Heart right ventricle (tissue), 16 donors: ENCODE measurements at regions of chr2 and their contacts with region 1.

Region 1: GRCh38 chr2:159797543-159798375 is at the start of gene CD302:
- DNase-seq: peak; percentile 80 to 86
- ATAC-seq: peak; percentile 81 to 93 (median 88)
- H3K4me3 ChIP-seq: peak within 1 kb of the TSS; percentile 56 to 97 (median 81)
- H3K27ac ChIP-seq: peak within 1 kb of the TSS; percentile 5 to 90 (median 82)
- H3K4me1 ChIP-seq: peaks cover 0 to 50% (median 16%) of the 10 kb centered on the region in 9 donors
- H3K27me3 ChIP-seq: no peaks in the 10 kb centered on the region
- CTCF ChIP-seq: no peak
- total RNA-seq, gene CD302: 8.2 to 25.2 (median 12.9) TPM

Region 2: DNA sequence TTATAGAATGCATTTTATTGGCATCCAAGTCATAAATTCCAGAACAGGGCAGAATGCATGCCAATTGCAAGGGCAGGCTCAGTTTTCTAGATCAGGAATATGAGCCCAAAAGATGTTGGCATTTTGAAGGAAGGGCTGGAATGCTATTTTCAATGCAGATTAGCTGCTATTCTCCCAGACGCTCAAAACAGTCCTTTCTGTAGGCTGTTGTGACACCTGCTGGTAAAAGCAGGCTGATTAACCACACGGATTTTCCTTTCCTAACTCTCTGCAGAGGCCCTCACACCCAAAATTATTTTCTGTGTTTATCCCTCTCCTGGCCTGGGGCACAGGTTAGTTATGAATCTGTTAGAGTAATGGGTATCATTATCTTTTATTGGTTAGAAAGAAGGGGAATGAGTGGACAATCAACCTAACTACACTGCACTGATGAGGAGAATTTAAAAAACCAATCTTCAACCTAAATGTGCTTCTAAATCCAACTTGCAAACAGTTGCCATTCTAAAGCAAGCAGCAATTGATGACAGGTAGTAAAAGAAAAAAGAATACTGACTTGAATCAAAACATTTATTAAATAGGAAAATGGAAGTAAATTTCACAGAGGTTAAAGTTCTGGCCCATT is 170.6 kb after region 1 on chr2:
- intact Hi-C with region 1: loop called in 3 of 10 experiments (anchors 10 kb)
- DNase-seq: peak in 1 of 2 donors; percentile 32
- ATAC-seq: peak in 6 of 8 donors; percentile 55 to 79 (median 72)
- H3K4me3 ChIP-seq: no peak overlapping the region
- H3K27ac ChIP-seq: no peak overlapping the region
- H3K4me1 ChIP-seq: peaks cover 0 to 4% (median 0%) of the 10 kb centered on the region in 9 donors
- H3K27me3 ChIP-seq: no peaks in the 10 kb centered on the region
- CTCF ChIP-seq: peak; percentile 40 to 75 (median 63)

Region 3: DNA sequence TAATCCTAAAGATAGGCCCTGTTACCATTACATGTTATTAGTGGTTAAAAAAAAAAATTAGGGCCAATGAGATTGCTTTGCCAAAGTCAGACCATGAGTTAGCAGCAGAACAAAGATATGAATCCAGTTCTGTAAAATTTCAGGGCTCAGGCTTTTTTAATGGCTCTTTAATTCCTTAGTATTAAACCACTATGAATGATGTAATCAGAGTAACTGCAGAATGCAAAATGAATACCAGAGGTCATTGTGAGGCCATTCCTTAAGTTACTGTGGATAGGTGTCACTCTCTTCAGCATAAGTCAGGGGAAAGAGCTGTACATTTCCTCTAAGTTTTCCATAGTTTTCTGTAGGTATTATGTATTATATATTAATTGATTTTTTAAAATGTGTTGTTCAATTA is 1576.2 kb after region 1 on chr2:
- intact Hi-C with region 1: no loop called
- DNase-seq: no peak
- ATAC-seq: no peak
- H3K4me3 ChIP-seq: no peak overlapping the region
- H3K27ac ChIP-seq: no peak overlapping the region
- H3K4me1 ChIP-seq: no peaks in the 10 kb centered on the region
- H3K27me3 ChIP-seq: no peaks in the 10 kb centered on the region
- CTCF ChIP-seq: no peak